Transverse colon (tissue), 4 donors: ENCODE measurements at regions of chr13 and their contacts with region 1.

Region 1: DNA sequence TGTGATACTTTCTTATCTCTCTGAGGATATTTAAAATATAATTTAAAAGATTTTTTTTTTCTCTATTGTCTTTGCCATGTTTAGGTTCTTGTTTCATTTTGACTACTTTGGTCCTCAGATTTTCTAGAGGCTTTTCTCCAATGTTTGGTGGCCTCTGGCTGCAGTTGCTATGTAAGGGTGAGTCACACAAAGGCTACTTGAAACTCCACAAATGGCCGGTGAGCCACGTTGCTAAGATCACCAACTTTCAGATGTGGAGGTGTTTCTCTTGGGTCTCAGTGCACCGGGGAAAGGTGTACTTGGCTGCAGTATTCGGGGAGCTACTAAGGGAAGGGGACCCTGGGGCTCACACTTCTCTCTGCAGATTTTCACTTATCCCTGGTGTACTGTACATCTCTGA is 248.1 kb downstream of the HS6ST3 start:
- DNase-seq: no peak
- H3K4me3 ChIP-seq: no peak overlapping the region
- H3K27ac ChIP-seq: no peak overlapping the region
- H3K4me1 ChIP-seq: no peaks in the 10 kb centered on the region
- H3K27me3 ChIP-seq: no peaks in the 10 kb centered on the region
- CTCF ChIP-seq: no peak
- EP300 ChIP-seq: no peak
- POLR2A ChIP-seq: no peak

Region 2: DNA sequence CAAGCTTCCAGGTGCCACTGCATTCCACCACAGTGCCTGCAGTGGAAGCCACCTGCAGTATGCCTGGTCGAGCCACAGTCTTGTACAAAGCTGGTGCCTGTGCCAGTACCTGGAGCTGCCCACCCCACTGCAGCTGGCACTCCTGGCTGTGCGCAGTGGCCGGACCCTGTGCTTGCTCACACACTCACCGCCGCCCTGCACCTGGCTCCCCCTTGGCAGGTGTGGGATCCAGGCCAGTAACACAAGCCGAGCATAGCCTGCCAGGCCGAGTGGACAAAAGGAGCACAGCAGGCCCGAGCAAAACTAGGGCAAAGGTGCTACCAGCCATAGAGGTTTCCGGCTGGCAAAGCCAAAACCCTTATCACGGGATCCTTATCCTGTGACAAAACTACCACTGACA is 303.4 kb before region 1 on chr13:
- in situ Hi-C with region 1: no loop called
- intact Hi-C with region 1: no loop called
- DNase-seq: no peak
- H3K4me3 ChIP-seq: no peak overlapping the region
- H3K27ac ChIP-seq: no peak overlapping the region
- H3K4me1 ChIP-seq: no peaks in the 10 kb centered on the region
- H3K27me3 ChIP-seq: no peaks in the 10 kb centered on the region
- CTCF ChIP-seq: no peak
- EP300 ChIP-seq: no peak
- POLR2A ChIP-seq: no peak

Region 3: GRCh38 chr13:96398486-96398885 is 60.5 kb after region 1 on chr13:
- in situ Hi-C with region 1: loop called in 1 of 4 experiments (anchors 10 kb)
- intact Hi-C with region 1: no loop called
- DNase-seq: no peak
- H3K4me3 ChIP-seq: no peak overlapping the region
- H3K27ac ChIP-seq: no peak overlapping the region
- H3K4me1 ChIP-seq: no peaks in the 10 kb centered on the region
- H3K27me3 ChIP-seq: no peaks in the 10 kb centered on the region
- CTCF ChIP-seq: no peak
- EP300 ChIP-seq: no peak
- POLR2A ChIP-seq: no peak